ENCODE measurements at regions of chr1 and their contacts with region 1.

Region 1: DNA sequence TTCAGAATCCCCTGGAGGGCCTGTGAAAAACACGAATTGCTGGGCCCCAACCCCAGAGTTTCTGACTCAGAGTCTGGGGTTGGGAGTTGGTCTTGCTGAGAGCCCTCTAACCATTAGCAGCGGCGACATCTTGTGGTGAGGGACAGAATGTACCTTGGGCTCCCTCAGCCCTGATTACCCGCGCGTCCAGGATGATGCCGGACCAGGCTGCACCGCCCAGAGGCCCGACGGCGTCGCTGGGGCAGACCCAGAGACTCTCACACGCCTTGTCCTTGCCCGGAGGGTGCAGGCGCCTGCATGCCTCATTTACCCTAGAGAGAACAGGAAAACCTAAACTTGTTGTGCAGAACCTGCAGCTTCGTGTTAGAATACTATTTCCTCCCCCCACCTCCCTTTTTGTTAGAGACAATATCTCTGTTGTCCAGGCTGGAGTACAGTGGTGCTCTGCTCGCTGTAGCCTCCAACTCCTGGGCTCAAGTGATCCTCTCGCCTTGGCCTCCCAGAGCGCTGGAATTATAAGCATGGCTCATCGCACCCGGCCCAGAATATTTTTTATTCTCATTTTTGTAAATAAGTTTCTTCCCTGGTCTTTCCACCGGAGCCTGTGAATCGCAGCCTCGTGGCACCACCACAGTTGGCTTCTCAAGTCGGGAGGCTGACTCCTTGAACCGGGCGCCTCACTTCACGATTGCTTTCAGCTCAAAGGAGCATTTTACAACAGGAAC is 22.2 kb upstream of the RD3 start:
- DNase-seq: peak; percentile 82 to 89 (median 88)
- H3K4me3 ChIP-seq: peak overlapping the region in 4 of 7 experiments; percentile 23 to 65 (median 28)
- H3K27ac ChIP-seq: no peak overlapping the region
- H3K4me1 ChIP-seq: peaks cover 2 to 37% (median 30%) of the 10 kb centered on the region in 4 experiments
- H3K27me3 ChIP-seq: no peaks in the 10 kb centered on the region

Region 2: DNA sequence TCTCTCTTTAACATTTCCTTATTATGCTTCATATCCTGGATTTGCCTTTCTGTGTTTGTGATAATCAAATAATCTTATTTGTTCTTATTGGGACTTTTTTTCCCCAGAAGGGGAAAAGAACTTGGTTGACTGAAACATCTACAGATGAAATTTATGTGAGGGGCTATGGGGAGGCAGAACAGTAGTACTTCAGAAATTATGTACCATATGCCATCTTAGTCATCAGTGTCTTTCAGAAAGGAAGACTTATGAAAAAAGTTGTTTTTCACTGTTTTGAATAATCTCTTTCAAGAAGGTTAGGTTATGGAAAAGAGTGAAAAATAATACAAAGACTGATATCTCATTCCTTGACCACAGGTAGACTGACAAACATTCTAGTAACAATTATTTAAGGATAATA is 217.8 kb before region 1 on chr1:
- CTCF ChIA-PET with region 1: interaction called, 10 read pairs
- POLR2A ChIA-PET with region 1: no interaction called
- DNase-seq: no peak
- H3K4me3 ChIP-seq: no peak overlapping the region
- H3K27ac ChIP-seq: no peak overlapping the region
- H3K4me1 ChIP-seq: no peaks in the 10 kb centered on the region
- H3K27me3 ChIP-seq: no peaks in the 10 kb centered on the region

Region 3: GRCh38 chr1:211415700-211416099 is 98.5 kb before region 1 on chr1:
- CTCF ChIA-PET with region 1: interaction called, 12 read pairs
- POLR2A ChIA-PET with region 1: no interaction called
- DNase-seq: peak in 1 of 3 donors; percentile 2
- H3K4me3 ChIP-seq: peak overlapping the region in 3 of 7 experiments; percentile 20 to 40 (median 26)
- H3K27ac ChIP-seq: no peak overlapping the region
- H3K4me1 ChIP-seq: peaks cover 0 to 7% (median 4%) of the 10 kb centered on the region in 4 experiments
- H3K27me3 ChIP-seq: no peaks in the 10 kb centered on the region

Region 4: GRCh38 chr1:211476200-211476849 is 37.9 kb before region 1 on chr1:
- CTCF ChIA-PET with region 1: interaction called, 83 read pairs
- POLR2A ChIA-PET with region 1: no interaction called
- DNase-seq: peak; percentile 82 to 93 (median 88)
- H3K4me3 ChIP-seq: no peak overlapping the region
- H3K27ac ChIP-seq: no peak overlapping the region
- H3K4me1 ChIP-seq: peaks cover 0 to 19% (median 4%) of the 10 kb centered on the region in 4 experiments
- H3K27me3 ChIP-seq: peaks cover 0 to 3% (median 0%) of the 10 kb centered on the region in 5 experiments

Region 5: DNA sequence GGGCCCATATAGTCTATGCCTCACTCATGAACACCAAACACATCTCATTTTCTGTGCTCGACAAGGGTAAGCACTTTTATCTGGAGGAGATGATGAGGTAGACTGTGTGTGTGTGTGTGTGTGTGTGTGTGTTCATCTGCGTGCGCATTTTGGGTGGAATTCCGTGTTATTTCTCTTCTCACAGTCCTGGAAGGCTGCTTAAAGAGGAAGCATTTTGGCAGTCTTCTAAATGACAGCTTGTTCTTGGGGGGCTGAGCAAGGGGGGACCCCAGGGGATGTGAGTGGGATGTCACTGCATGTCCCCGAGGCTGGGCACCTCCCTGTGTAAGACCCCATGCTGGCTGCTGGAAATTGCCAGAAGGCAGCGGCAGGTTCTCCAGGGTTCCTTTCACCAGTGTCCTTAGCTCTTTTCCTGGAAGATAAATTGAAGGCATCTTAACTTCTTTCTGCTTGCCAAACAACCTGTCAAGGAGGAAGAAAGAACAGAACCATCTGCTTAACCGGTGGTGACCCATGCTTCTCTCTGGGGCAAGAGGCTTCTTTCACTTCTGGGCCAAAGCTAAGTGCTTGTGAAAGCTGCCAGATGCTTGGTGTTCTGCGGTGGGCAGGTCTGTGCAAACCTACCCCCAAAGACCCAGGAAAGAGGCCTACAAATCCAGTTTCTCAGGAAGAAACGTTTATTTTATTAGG is 12.3 kb before region 1 on chr1:
- CTCF ChIA-PET with region 1: interaction called, 25 read pairs
- POLR2A ChIA-PET with region 1: no interaction called
- DNase-seq: no peak
- H3K4me3 ChIP-seq: no peak overlapping the region
- H3K27ac ChIP-seq: no peak overlapping the region
- H3K4me1 ChIP-seq: no peaks in the 10 kb centered on the region
- H3K27me3 ChIP-seq: peaks cover 0 to 3% (median 0%) of the 10 kb centered on the region in 5 experiments

Region 6: GRCh38 chr1:211648980-211649934 is 135.1 kb after region 1 on chr1:
- CTCF ChIA-PET with region 1: interaction called, 42 read pairs
- POLR2A ChIA-PET with region 1: no interaction called
- DNase-seq: peak in 1 of 3 donors; percentile 66
- H3K4me3 ChIP-seq: no peak overlapping the region
- H3K27ac ChIP-seq: no peak overlapping the region
- H3K4me1 ChIP-seq: no peaks in the 10 kb centered on the region
- H3K27me3 ChIP-seq: peaks cover 0 to 2% (median 0%) of the 10 kb centered on the region in 5 experiments

Region 7: DNA sequence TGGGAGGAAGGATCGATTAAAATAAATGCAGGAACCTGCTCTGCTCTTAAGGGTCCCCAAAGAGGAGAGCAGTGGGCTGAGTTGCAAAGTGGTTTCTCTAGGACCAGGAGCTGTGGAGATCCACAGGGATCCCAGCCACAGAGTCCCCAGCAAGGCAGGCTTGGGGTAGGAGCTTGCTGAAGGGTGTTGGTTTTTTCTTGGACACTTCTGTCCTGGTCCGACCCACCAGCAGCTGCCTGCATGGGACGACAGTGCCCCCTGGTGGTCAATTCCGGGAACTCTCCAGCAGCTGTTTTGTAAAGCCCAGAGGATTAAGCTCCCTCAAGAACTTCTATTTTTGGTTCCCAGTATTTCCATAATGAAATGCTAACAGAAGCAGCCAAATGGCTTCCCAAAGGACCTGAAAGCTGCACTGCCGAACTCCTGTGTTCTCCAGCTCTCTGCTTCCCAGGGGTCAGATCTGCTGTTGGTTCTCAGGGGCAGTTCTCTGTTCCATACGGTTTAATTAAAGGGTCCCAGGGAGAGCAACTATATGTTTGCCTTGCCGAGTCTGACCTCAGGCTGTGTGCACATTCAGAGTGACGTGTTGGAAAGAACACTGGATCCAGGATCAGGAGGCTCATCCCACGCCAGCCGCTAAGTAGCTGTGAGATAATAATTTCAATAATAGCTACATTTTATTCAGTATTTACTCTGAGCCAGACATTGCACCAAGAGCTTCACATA is 941.8 kb after region 1 on chr1:
- CTCF ChIA-PET with region 1: no interaction called
- POLR2A ChIA-PET with region 1: no interaction called
- DNase-seq: peak; percentile 73 to 87 (median 79)
- H3K4me3 ChIP-seq: no peak overlapping the region
- H3K27ac ChIP-seq: no peak overlapping the region
- H3K4me1 ChIP-seq: peaks cover 0 to 26% (median 15%) of the 10 kb centered on the region in 4 experiments
- H3K27me3 ChIP-seq: no peaks in the 10 kb centered on the region

Measured in common myeloid progenitor, CD34-positive (primary cell).